ENCODE measurements at regions of chr1 and their contacts with region 1.

Region 1: GRCh38 chr1:241640029-241640818 is at the starts of genes CHML and OPN3:
- DNase-seq: peak; percentile 96
- H3K4me3 Mint-ChIP-seq: peak within 1 kb of the TSS; percentile 75
- H3K27ac Mint-ChIP-seq: peak within 1 kb of the TSS; percentile 100
- H3K4me1 Mint-ChIP-seq: peaks cover 56% of the 10 kb centered on the region
- H3K27me3 Mint-ChIP-seq: no peaks in the 10 kb centered on the region
- CTCF ChIP-seq: no peak
- total RNA-seq, gene CHML: 33.7 and 33.8 TPM in 2 replicates
- total RNA-seq, gene OPN3: 45.6 and 56.1 TPM in 2 replicates

Region 2: DNA sequence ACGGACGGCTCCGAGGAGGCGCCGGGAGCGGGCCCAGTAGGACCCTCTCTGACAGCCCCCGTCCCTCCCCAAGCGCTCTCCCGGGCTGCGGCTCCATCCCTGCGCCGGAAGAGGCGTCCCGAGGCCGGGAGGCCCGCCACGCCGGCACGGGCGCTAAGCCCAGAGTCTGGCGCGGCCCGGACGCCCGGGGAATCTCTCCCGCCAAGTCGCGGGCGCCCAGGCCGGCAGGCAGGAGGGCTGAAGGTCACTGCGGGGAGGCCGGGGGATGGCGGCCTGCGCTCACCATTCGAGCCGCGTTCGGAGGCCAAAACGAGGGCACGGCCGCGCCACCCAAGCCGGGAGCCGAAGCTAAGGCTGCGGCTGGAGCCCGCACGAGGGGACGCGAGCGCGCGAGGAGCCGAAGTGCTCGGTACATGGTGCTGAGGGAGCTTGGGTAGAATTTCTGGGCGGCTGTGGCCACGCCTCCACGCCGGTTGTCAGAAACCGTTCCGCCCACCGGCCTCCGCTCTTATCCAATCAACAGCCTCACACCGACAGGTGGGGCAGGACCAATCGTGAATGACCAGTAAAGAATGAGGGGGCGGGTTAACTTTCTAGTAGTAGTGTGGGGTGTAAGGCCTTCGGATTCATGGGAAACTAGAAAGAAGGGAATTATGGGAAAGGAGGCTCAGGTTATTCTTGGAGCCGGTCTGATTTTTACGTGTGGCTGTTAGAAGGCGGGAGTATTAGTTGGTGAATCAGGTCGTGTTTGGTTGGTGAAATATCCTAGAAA is 120.7 kb before region 1 on chr1 and contains the start of gene FH:
- CTCF ChIA-PET with region 1: interaction called, 7 read pairs
- POLR2A ChIA-PET with region 1: interaction called, 31 read pairs
- intact Hi-C with region 1: no loop called
- DNase-seq: peak; percentile 100
- H3K4me3 Mint-ChIP-seq: no peak within 1 kb of the TSS
- H3K27ac Mint-ChIP-seq: peak within 1 kb of the TSS; percentile 67
- H3K4me1 Mint-ChIP-seq: peaks cover 19% of the 10 kb centered on the region
- H3K27me3 Mint-ChIP-seq: peaks cover 13% of the 10 kb centered on the region
- CTCF ChIP-seq: no peak
- total RNA-seq, gene FH: 136 and 215 TPM in 2 replicates

Region 3: GRCh38 chr1:241627453-241628259 is 12.6 kb before region 1 on chr1:
- CTCF ChIA-PET with region 1: interaction called, 44 read pairs
- POLR2A ChIA-PET with region 1: interaction called, 39 read pairs
- intact Hi-C with region 1: no loop called
- DNase-seq: peak; percentile 92
- H3K4me3 Mint-ChIP-seq: no peak overlapping the region
- H3K27ac Mint-ChIP-seq: peak overlapping the region; percentile 52
- H3K4me1 Mint-ChIP-seq: peaks cover 58% of the 10 kb centered on the region
- H3K27me3 Mint-ChIP-seq: no peaks in the 10 kb centered on the region
- CTCF ChIP-seq: peak; percentile 80

Region 4: DNA sequence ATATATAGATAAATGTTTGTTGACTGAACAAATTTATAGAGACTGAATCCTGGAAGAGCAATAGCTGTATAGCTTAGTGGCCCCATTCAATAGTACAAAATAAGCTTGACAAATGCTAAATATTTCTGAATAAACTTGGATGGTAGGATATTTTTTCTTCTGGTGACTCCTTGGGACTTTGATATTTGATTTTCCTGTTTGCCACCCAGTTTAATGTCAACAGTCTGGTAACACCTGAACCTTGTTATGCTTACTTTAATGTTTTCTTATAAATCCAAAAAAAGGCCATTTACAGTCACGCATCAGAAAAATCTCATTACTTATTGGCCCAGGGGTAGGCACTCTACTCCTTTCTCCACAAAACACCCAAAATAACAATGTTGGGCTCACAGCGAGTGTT is 42.7 kb after region 1 on chr1:
- CTCF ChIA-PET with region 1: interaction called, 13 read pairs
- POLR2A ChIA-PET with region 1: interaction called, 151 read pairs
- intact Hi-C with region 1: no loop called
- DNase-seq: no peak
- H3K4me3 Mint-ChIP-seq: no peak overlapping the region
- H3K27ac Mint-ChIP-seq: no peak overlapping the region
- H3K4me1 Mint-ChIP-seq: peaks cover 2% of the 10 kb centered on the region
- H3K27me3 Mint-ChIP-seq: no peaks in the 10 kb centered on the region
- CTCF ChIP-seq: no peak

Region 5: GRCh38 chr1:241716915-241717656 is 76.9 kb after region 1 on chr1:
- CTCF ChIA-PET with region 1: interaction called, 3 read pairs
- POLR2A ChIA-PET with region 1: interaction called, 73 read pairs
- intact Hi-C with region 1: loop called (anchors 2 kb)
- DNase-seq: no peak
- H3K4me3 Mint-ChIP-seq: no peak overlapping the region
- H3K27ac Mint-ChIP-seq: peak overlapping the region; percentile 93
- H3K4me1 Mint-ChIP-seq: peaks cover 48% of the 10 kb centered on the region
- H3K27me3 Mint-ChIP-seq: no peaks in the 10 kb centered on the region
- CTCF ChIP-seq: no peak

Region 6: GRCh38 chr1:241825581-241825980 is 185.4 kb after region 1 on chr1:
- CTCF ChIA-PET with region 1: interaction called, 4 read pairs
- POLR2A ChIA-PET with region 1: interaction called, 14 read pairs
- intact Hi-C with region 1: no loop called
- DNase-seq: no peak
- H3K4me3 Mint-ChIP-seq: no peak overlapping the region
- H3K27ac Mint-ChIP-seq: no peak overlapping the region
- H3K4me1 Mint-ChIP-seq: peaks cover 7% of the 10 kb centered on the region
- H3K27me3 Mint-ChIP-seq: no peaks in the 10 kb centered on the region
- CTCF ChIP-seq: no peak